Endothelial cell of umbilical vein (primary cell): ENCODE measurements at regions of chr2 and their contacts with region 1.

Region 1: GRCh38 chr2:176140513-176141317 is 10.6 kb upstream of the HOXD4 start:
- DNase-seq: peak; percentile 82
- H3K4me3 ChIP-seq: peak overlapping the region; percentile 16 to 51 (median 39)
- H3K27ac ChIP-seq: peak overlapping the region; percentile 56
- H3K4me1 ChIP-seq: peaks cover 30% of the 10 kb centered on the region
- H3K27me3 ChIP-seq: no peaks in the 10 kb centered on the region
- CTCF ChIP-seq: peak; percentile 80 to 83
- POLR2A ChIP-seq: peak; percentile 58

Region 2: GRCh38 chr2:176187899-176188773 is 47.4 kb after region 1 on chr2 and contains the start of gene HOXD1:
- CTCF ChIA-PET with region 1: interaction called, 26 read pairs
- POLR2A ChIA-PET with region 1: interaction called, 5 read pairs
- dilution Hi-C with region 1: no loop called
- intact Hi-C with region 1: loop called (anchors 1 kb)
- DNase-seq: peak; percentile 83
- H3K4me3 ChIP-seq: peak within 1 kb of the TSS; percentile 86 to 96 (median 93)
- H3K27ac ChIP-seq: peak within 1 kb of the TSS; percentile 74
- H3K4me1 ChIP-seq: peaks cover 33% of the 10 kb centered on the region
- H3K27me3 ChIP-seq: no peaks in the 10 kb centered on the region
- CTCF ChIP-seq: no peak
- POLR2A ChIP-seq: peak; percentile 86
- total RNA-seq, gene HOXD1: 10.4 and 14.1 TPM in 2 replicates

Region 3: GRCh38 chr2:176445956-176446355 is 305.2 kb after region 1 on chr2:
- CTCF ChIA-PET with region 1: interaction called, 338 read pairs
- POLR2A ChIA-PET with region 1: no interaction called
- dilution Hi-C with region 1: no loop called
- intact Hi-C with region 1: no loop called
- DNase-seq: peak; percentile 73
- H3K4me3 ChIP-seq: no peak overlapping the region
- H3K27ac ChIP-seq: peak overlapping the region; percentile 78
- H3K4me1 ChIP-seq: peaks cover 17% of the 10 kb centered on the region
- H3K27me3 ChIP-seq: no peaks in the 10 kb centered on the region
- CTCF ChIP-seq: no peak
- POLR2A ChIP-seq: no peak

Region 4: DNA sequence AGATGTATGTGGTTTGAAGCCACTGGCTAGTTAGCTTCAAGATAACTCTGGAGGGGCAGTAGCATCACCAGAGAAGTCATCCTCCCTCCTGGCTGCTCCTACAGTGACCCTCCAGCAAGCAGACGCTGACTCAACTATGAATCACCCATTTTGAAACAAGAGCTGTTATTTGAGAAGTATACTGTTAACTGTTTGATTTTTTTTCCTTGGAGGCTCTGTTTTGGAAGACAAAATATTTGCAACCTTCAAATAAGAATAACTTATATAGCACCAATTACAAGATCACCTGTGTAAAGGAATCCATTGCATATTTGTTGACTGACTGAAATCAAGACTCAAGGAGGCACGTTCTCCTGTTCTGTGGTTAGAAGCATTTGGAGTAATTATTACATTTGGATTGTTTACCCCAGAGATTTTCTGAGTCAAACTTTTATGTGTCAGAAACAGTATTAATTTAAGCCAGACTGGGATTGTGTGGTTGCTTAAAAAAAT is 442.3 kb after region 1 on chr2:
- CTCF ChIA-PET with region 1: interaction called, 5 read pairs
- POLR2A ChIA-PET with region 1: no interaction called
- dilution Hi-C with region 1: no loop called
- intact Hi-C with region 1: loop called (anchors 1 kb)
- DNase-seq: peak; percentile 92
- H3K4me3 ChIP-seq: peak overlapping the region in 2 of 3 experiments; percentile 13 to 35
- H3K27ac ChIP-seq: peak overlapping the region; percentile 91
- H3K4me1 ChIP-seq: peaks cover 30% of the 10 kb centered on the region
- H3K27me3 ChIP-seq: no peaks in the 10 kb centered on the region
- CTCF ChIP-seq: no peak
- POLR2A ChIP-seq: no peak

Region 5: GRCh38 chr2:176814306-176815052 is 673.8 kb after region 1 on chr2:
- CTCF ChIA-PET with region 1: interaction called, 14 read pairs
- POLR2A ChIA-PET with region 1: no interaction called
- dilution Hi-C with region 1: no loop called
- intact Hi-C with region 1: no loop called
- DNase-seq: peak; percentile 38
- H3K4me3 ChIP-seq: no peak overlapping the region
- H3K27ac ChIP-seq: no peak overlapping the region
- H3K4me1 ChIP-seq: no peaks in the 10 kb centered on the region
- H3K27me3 ChIP-seq: peaks cover 0 to 9% of the 10 kb centered on the region in 2 experiments
- CTCF ChIP-seq: peak; percentile 16 to 17
- POLR2A ChIP-seq: no peak

Region 6: DNA sequence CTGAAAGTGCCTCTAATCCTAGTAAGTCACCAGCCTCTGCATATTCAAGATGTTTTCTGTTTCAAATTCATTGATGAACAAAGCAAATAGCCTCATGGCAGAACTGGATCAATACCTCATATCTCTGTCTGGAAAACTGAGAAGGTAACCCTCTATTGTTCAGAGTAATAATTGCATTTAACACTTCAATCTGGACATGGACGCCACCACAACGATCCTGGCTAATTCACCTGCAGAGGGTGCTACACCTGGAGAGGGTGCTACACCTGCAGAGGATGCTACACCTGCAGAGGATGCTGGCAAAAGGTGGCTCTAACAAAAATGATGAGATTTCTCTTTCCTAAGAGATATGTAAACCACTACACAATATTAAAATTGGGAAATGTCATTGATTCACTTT is 888.8 kb after region 1 on chr2:
- CTCF ChIA-PET with region 1: no interaction called
- POLR2A ChIA-PET with region 1: no interaction called
- dilution Hi-C with region 1: no loop called
- intact Hi-C with region 1: no loop called
- DNase-seq: no peak
- H3K4me3 ChIP-seq: no peak overlapping the region
- H3K27ac ChIP-seq: no peak overlapping the region
- H3K4me1 ChIP-seq: no peaks in the 10 kb centered on the region
- H3K27me3 ChIP-seq: peaks cover 2 to 5% of the 10 kb centered on the region in 2 experiments
- CTCF ChIP-seq: no peak
- POLR2A ChIP-seq: no peak